CD4-positive, alpha-beta memory T cell (primary cell): ENCODE measurements at regions of chr22 and their contacts with region 1.

Region 1: GRCh38 chr22:35539910-35540594 is 579 bp upstream of the RASD2 start:
- DNase-seq: peak; percentile 49 to 62 (median 50)
- H3K4me3 ChIP-seq: peak overlapping the region; percentile 29 to 52
- H3K4me3 Mint-ChIP-seq: peak overlapping the region; percentile 70 to 84 (median 78)
- H3K27ac ChIP-seq: no peak overlapping the region
- H3K27ac Mint-ChIP-seq: peak overlapping the region in 1 of 7 donors; percentile 46
- H3K4me1 ChIP-seq: peaks cover 12% of the 10 kb centered on the region
- H3K4me1 Mint-ChIP-seq: peaks cover 5 to 17% (median 10%) of the 10 kb centered on the region in 4 donors
- H3K27me3 ChIP-seq: peaks cover 12% of the 10 kb centered on the region
- H3K27me3 Mint-ChIP-seq: peaks cover 10 to 26% of the 10 kb centered on the region in 2 donors

Region 2: GRCh38 chr22:35552196-35552842 is 12.3 kb after region 1 on chr22:
- CTCF ChIA-PET with region 1: interaction called, 3 read pairs
- POLR2A ChIA-PET with region 1: interaction called, 11 read pairs
- intact Hi-C with region 1: loop called (anchors 1 kb)
- DNase-seq: peak; percentile 82 to 92 (median 83)
- H3K4me3 ChIP-seq: no peak overlapping the region
- H3K4me3 Mint-ChIP-seq: peak overlapping the region in 7 of 8 donors; percentile 26 to 82 (median 68)
- H3K27ac ChIP-seq: no peak overlapping the region
- H3K27ac Mint-ChIP-seq: peak overlapping the region; percentile 7 to 91 (median 63)
- H3K4me1 ChIP-seq: peaks cover 25% of the 10 kb centered on the region
- H3K4me1 Mint-ChIP-seq: peaks cover 6 to 21% (median 15%) of the 10 kb centered on the region in 4 donors
- H3K27me3 ChIP-seq: no peaks in the 10 kb centered on the region
- H3K27me3 Mint-ChIP-seq: peaks cover 0 to under 1% of the 10 kb centered on the region in 2 donors